Right cardiac atrium (tissue), 5 donors: ENCODE measurements at regions of chr13 and their contacts with region 1.

Region 1: GRCh38 chr13:31742097-31742734 is 2.9 kb downstream of the RXFP2 start:
- DNase-seq: peak; percentile 45 to 72 (median 69)
- ATAC-seq: peak; percentile 70 to 83
- H3K4me3 ChIP-seq: no peak overlapping the region
- H3K27ac ChIP-seq: no peak overlapping the region
- H3K4me1 ChIP-seq: no peaks in the 10 kb centered on the region
- H3K27me3 ChIP-seq: no peaks in the 10 kb centered on the region

Region 2: DNA sequence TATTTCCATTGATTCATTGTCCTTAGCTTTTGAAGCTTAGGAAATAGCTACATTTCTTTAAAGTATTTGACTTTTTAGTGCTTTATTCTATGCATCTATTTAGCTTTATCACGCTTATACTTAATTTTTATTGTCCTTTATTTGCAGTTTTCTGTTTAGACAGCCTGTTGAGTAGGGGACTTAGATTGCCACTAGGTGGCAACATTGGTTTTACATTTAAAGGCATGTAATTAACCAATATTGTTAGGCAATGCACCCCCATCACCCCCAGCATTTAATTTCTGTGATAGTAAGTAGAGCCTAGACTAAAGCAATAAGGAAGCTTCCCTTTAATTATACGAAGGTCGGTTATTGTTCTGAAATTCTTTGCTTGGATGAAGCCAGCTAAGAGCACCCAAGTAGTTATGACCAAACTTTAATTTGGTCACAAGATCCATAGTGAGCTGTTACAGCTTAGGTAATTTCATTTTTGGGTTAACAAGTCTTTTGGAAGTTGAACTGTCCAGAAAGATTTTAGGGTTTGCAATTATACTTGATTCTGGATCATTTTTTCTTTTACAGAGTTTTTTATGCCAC is 505.9 kb before region 1 on chr13:
- intact Hi-C with region 1: loop called in 2 of 4 experiments (anchors 5 kb)
- DNase-seq: no peak
- ATAC-seq: no peak
- H3K4me3 ChIP-seq: no peak overlapping the region
- H3K27ac ChIP-seq: no peak overlapping the region
- H3K4me1 ChIP-seq: no peaks in the 10 kb centered on the region
- H3K27me3 ChIP-seq: no peaks in the 10 kb centered on the region

Region 3: DNA sequence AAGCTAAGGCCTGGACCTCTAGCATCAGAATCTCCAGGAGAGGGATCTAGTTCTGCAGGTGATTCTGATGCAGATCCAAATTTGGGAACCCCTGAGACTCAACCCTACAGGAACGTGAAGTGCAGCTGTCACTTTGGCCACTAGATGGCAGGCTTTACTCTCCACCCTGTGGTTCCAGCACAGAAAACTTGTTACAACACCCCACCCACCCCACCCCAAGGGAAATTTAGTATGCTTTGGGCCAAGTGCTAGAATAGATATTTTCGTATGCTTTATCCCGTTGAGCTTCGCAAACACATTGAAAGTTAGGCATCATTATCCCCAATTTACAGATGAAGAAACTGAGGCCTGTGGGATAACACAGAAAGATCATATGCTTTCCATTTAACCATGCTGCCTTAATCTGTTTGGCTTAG is 310.5 kb before region 1 on chr13:
- intact Hi-C with region 1: loop called (anchors 2 to 5 kb)
- DNase-seq: peak; percentile 53 to 83 (median 65)
- ATAC-seq: peak; percentile 57 to 78
- H3K4me3 ChIP-seq: no peak overlapping the region
- H3K27ac ChIP-seq: no peak overlapping the region
- H3K4me1 ChIP-seq: no peaks in the 10 kb centered on the region
- H3K27me3 ChIP-seq: no peaks in the 10 kb centered on the region

Region 4: DNA sequence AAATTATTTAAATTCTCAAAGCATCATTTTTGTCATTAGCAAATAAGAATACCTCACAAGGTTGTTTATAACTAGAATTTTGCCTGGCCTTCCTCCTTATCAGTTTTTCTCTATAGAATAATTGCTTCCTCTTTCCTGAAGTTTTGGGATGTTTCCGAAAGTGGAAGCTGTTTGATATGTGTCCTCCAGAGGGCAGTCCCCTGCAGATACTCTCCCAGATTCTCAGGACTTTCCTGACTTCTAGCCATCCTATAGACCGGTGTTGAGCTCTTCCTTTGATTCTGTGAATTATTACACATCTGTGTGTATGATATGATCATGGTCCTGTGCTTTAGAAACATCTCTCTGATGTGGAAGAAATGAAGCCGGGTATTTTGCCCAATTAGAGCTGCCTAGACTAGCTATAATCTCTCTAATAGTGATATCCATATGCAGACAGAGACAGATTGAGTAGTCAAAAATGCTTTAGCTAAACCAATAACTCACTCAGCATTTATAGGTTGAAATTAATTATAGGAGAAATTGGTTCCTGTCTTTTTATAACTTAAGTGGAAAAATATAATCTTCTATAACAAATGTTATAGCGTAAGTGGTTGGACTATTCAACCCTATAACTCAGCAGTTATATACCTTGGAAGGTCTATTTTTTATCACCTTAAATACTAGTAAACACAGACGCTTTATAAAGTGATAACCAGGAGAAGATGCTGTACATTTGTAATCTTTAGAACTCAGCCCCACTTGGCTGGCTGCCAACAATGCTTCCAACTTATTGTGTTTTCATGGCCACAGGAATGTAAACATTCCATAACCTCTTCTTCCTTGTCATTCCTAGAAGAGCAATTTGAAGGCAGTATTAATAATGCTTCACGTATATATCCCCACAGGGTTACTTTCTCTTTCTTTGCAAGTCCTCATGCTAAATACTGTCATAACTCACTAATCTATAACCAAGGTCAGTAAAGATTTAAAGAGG is 203.9 kb before region 1 on chr13:
- intact Hi-C with region 1: loop called in 2 of 4 experiments (anchors 10 kb)
- DNase-seq: peak in 1 of 3 donors; percentile 41
- ATAC-seq: peak in 1 of 2 donors; percentile 66
- H3K4me3 ChIP-seq: no peak overlapping the region
- H3K27ac ChIP-seq: no peak overlapping the region
- H3K4me1 ChIP-seq: no peaks in the 10 kb centered on the region
- H3K27me3 ChIP-seq: no peaks in the 10 kb centered on the region